CD8-positive, alpha-beta T cell (primary cell): ENCODE measurements at regions of chr15 and their contacts with region 1.

Region 1: GRCh38 chr15:43800286-43801141 is at the start of gene HYPK:
- DNase-seq: peak; percentile 83 to 95 (median 93)
- ATAC-seq: peak; percentile 99
- H3K4me3 ChIP-seq: peak within 1 kb of the TSS; percentile 63 to 98
- H3K4me3 Mint-ChIP-seq: peak within 1 kb of the TSS; percentile 99
- H3K27ac ChIP-seq: peak within 1 kb of the TSS; percentile 60 to 93
- H3K27ac Mint-ChIP-seq: peak within 1 kb of the TSS; percentile 98
- H3K4me1 ChIP-seq: peaks cover 25% of the 10 kb centered on the region
- H3K4me1 Mint-ChIP-seq: peaks cover 45% of the 10 kb centered on the region
- H3K27me3 ChIP-seq: no peaks in the 10 kb centered on the region
- H3K27me3 Mint-ChIP-seq: no peaks in the 10 kb centered on the region
- CTCF ChIP-seq: no peak
- total RNA-seq, gene HYPK: 10.9 to 14.0 TPM

Region 2: DNA sequence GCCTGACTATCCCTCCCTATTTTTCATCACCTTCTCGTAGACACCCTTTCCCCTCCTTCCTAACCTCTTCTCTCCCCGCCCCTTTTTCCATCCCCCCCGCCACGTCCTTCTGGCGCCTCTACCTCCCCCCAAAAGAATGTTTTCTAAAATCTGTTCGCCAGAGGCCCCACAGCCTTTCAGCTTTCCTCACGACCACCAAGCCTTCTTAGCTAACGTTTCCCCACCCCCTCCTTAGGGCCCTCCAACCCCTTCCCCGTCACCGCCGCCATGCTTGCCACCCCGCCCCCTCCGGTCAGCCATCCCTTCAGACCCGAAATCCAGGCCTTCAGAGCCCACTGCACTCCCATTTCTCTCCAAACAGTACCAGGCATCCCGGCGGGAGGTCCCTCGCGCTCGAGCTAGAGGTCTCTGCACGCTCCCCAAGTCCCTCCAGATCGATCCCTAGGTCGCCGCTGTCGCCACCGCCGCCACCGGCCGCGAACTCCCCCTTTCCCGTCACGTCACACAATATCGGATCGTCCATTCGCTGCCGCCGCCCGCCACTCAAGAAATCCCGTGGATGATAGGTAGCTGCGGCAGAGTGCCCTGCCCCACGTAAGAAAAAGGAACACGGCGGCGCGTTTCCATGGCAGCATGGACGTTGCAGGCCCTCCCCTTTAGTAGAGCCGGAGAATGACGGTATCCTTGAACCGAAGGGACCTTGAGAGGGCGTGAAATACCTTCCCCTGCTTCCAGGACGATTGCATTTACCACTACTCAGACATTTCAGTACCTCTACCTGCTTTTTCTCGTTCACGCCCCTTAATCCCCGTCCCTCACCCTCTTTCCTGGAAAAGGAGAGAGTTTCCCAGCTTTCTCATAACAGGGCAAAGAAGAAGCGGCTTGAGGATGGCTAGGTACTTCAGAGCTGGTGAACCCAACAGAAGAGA is 307.6 kb before region 1 on chr15 and contains the start of gene TP53BP1:
- CTCF ChIA-PET with region 1: no interaction called
- POLR2A ChIA-PET with region 1: no interaction called
- intact Hi-C with region 1: loop called (anchors 1 to 5 kb)
- DNase-seq: peak; percentile 87 to 97 (median 94)
- ATAC-seq: peak; percentile 98
- H3K4me3 ChIP-seq: peak within 1 kb of the TSS; percentile 87 to 92
- H3K4me3 Mint-ChIP-seq: peak within 1 kb of the TSS; percentile 99
- H3K27ac ChIP-seq: peak within 1 kb of the TSS; percentile 95 to 96
- H3K27ac Mint-ChIP-seq: peak within 1 kb of the TSS; percentile 98
- H3K4me1 ChIP-seq: peaks cover 24% of the 10 kb centered on the region
- H3K4me1 Mint-ChIP-seq: peaks cover 32% of the 10 kb centered on the region
- H3K27me3 ChIP-seq: no peaks in the 10 kb centered on the region
- H3K27me3 Mint-ChIP-seq: no peaks in the 10 kb centered on the region
- CTCF ChIP-seq: no peak
- total RNA-seq, gene TP53BP1: 54.6 to 59.7 TPM

Region 3: DNA sequence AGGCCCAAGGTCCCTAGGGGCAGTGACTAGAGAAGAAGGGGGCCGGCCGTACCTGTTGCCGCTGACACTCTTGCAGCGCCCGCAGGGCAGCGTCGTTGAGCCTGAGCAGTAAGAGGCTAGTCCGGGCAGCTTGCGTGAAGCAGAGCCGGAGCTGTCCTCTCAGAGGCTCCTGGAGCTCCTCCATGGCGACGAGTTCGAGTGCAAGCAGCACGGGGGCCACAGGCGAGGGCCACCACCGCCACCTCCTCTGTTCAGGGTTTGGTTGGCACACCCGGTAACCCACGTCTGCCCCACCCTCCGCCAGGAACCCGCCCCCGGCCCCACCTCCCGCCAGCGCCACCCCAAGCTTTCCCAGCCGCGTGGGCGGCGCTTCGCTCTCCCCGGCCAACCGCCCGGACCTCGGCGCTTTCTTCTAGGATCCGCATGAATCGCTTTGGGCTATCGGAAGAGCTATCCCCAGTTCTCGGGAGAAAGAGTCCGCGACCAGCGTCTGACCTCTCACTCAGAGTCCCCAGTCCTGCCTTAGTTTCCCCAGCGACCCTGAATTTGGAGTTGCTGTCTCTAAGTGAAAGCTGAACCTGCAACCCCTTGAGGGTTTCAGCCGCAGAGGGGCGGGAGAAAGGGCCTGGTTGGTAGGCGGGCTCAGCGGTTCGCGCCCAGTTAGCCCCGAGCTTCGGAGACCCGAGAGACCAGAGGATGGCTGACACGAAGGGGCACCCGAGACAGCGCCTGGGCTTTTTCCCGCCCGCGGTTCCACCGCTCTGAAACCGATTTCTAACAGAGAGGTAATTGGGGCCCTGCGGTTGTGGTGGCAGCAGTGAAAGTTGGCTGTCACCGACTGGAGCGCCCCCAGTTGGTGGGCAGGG is 23.6 kb before region 1 on chr15 and contains the start of gene ELL3:
- CTCF ChIA-PET with region 1: interaction called, 8 read pairs
- POLR2A ChIA-PET with region 1: interaction called, 24 read pairs
- intact Hi-C with region 1: loop called in 1 of 2 experiments (anchors 1 kb)
- DNase-seq: peak; percentile 67 to 93 (median 82)
- ATAC-seq: peak; percentile 80
- H3K4me3 ChIP-seq: peak within 1 kb of the TSS; percentile 82 to 94
- H3K4me3 Mint-ChIP-seq: peak within 1 kb of the TSS; percentile 93
- H3K27ac ChIP-seq: peak within 1 kb of the TSS; percentile 50 to 56
- H3K27ac Mint-ChIP-seq: peak within 1 kb of the TSS; percentile 87
- H3K4me1 ChIP-seq: peaks cover 11% of the 10 kb centered on the region
- H3K4me1 Mint-ChIP-seq: peaks cover 15% of the 10 kb centered on the region
- H3K27me3 ChIP-seq: no peaks in the 10 kb centered on the region
- H3K27me3 Mint-ChIP-seq: no peaks in the 10 kb centered on the region
- CTCF ChIP-seq: peak; percentile 82
- total RNA-seq, gene ELL3: 0.67 to 1.1 TPM

Region 4: GRCh38 chr15:43948691-43949325 is 148.3 kb after region 1 on chr15:
- CTCF ChIA-PET with region 1: no interaction called
- POLR2A ChIA-PET with region 1: no interaction called
- intact Hi-C with region 1: no loop called
- DNase-seq: no peak
- ATAC-seq: no peak
- H3K4me3 ChIP-seq: no peak overlapping the region
- H3K4me3 Mint-ChIP-seq: no peak overlapping the region
- H3K27ac ChIP-seq: no peak overlapping the region
- H3K27ac Mint-ChIP-seq: no peak overlapping the region
- H3K4me1 ChIP-seq: no peaks in the 10 kb centered on the region
- H3K4me1 Mint-ChIP-seq: no peaks in the 10 kb centered on the region
- H3K27me3 ChIP-seq: peaks cover 0 to 3% of the 10 kb centered on the region in 2 experiments
- H3K27me3 Mint-ChIP-seq: peaks cover 10% of the 10 kb centered on the region
- CTCF ChIP-seq: no peak